ENCODE measurements at regions of chr9 and their contacts with region 1.

Region 1: GRCh38 chr9:32550562-32551433 is 1.3 kb upstream of the SMIM27 start:
- DNase-seq: peak; percentile 89 to 99 (median 96)
- ATAC-seq: peak; percentile 90
- H3K4me3 ChIP-seq: peak overlapping the region; percentile 93
- H3K4me3 Mint-ChIP-seq: peak overlapping the region; percentile 92 to 100 (median 99)
- H3K27ac ChIP-seq: peak overlapping the region; percentile 97
- H3K27ac Mint-ChIP-seq: peak overlapping the region; percentile 96 to 100 (median 98)
- H3K4me1 ChIP-seq: peaks cover 13 to 20% of the 10 kb centered on the region in 2 donors
- H3K4me1 Mint-ChIP-seq: peaks cover 31 to 70% (median 56%) of the 10 kb centered on the region in 7 donors
- H3K27me3 ChIP-seq: no peaks in the 10 kb centered on the region
- H3K27me3 Mint-ChIP-seq: no peaks in the 10 kb centered on the region

Region 2: DNA sequence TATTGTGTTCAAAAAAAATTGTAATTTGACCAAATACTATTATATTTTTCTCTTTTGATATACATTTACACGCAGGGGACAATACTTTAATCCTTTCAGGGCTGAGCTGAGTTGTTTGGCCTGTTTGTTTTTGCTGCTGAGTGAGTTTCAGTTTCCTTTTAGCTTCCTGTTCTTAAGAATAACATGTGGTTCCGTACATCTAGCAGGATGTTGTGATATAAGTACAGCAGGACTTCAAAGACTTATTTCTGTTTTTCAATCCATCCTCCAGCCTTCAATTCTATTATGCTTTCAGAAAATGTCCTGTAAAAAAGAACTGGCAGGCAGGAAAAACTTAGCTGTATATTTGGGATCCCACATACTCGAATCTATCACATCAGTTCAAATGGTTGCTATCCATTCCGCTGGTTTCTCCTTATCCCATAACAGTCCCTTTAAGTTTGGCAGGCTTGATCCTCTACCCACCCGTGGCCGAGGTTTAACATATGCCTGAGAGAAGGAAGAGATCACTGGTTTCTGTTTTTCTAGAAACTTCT is 1203.6 kb before region 1 on chr9:
- CTCF ChIA-PET with region 1: no interaction called
- POLR2A ChIA-PET with region 1: no interaction called
- intact Hi-C with region 1: loop called in 1 of 2 experiments (anchors 10 kb)
- DNase-seq: peak in 7 of 9 donors; percentile 58 to 81 (median 72)
- ATAC-seq: peak; percentile 97
- H3K4me3 ChIP-seq: peak overlapping the region; percentile 36
- H3K4me3 Mint-ChIP-seq: peak overlapping the region; percentile 63 to 82 (median 72)
- H3K27ac ChIP-seq: peak overlapping the region; percentile 77
- H3K27ac Mint-ChIP-seq: peak overlapping the region; percentile 93 to 98 (median 96)
- H3K4me1 ChIP-seq: peaks cover 25 to 26% of the 10 kb centered on the region in 2 donors
- H3K4me1 Mint-ChIP-seq: peaks cover 8 to 73% (median 58%) of the 10 kb centered on the region in 7 donors
- H3K27me3 ChIP-seq: no peaks in the 10 kb centered on the region
- H3K27me3 Mint-ChIP-seq: no peaks in the 10 kb centered on the region

Region 3: DNA sequence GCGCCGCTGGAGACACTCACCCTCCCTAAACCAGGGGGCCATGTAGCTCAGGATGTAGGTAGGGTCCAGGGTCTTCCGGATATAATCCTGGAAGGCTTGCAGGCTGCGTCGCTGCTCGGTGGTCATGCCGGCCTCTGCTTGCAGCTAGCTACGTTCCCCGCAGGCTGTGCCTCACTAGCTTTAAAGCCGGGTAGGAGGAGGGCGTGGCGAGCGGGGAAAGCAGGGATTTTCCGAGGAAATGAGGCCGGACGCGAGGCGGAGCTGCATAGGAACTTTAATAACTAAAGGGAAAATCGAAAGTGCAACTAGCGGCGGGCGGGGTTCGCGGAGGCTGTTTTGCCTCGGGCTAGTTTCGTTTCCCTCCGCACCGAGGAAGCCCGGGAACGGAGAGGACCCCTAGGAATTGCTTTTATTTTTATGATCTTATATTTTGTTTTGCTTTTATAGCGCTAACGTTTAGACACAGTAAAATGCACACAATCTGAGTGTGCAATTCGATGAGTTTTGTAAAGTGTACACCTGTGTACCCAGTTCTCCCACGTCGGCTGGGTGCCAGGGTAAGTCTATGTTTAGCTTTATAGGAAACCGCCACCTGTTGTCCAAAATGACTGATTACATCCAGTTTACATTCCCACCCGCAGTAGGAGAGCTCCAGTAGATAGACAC is 24.6 kb before region 1 on chr9 and contains the start of gene RIGI:
- CTCF ChIA-PET with region 1: interaction called, 12 read pairs
- POLR2A ChIA-PET with region 1: interaction called, 50 read pairs
- intact Hi-C with region 1: loop called (anchors 1 kb)
- DNase-seq: peak; percentile 52 to 85 (median 77)
- ATAC-seq: peak; percentile 84
- H3K4me3 ChIP-seq: peak within 1 kb of the TSS; percentile 98
- H3K4me3 Mint-ChIP-seq: peak within 1 kb of the TSS; percentile 83 to 99 (median 96)
- H3K27ac ChIP-seq: peak within 1 kb of the TSS; percentile 90
- H3K27ac Mint-ChIP-seq: peak within 1 kb of the TSS; percentile 84 to 98 (median 91)
- H3K4me1 ChIP-seq: peaks cover 9 to 29% of the 10 kb centered on the region in 2 donors
- H3K4me1 Mint-ChIP-seq: peaks cover 35 to 61% (median 58%) of the 10 kb centered on the region in 7 donors
- H3K27me3 ChIP-seq: no peaks in the 10 kb centered on the region
- H3K27me3 Mint-ChIP-seq: no peaks in the 10 kb centered on the region
- total RNA-seq, gene RIGI: 8.6 to 29.6 (median 26.8) TPM

Region 4: DNA sequence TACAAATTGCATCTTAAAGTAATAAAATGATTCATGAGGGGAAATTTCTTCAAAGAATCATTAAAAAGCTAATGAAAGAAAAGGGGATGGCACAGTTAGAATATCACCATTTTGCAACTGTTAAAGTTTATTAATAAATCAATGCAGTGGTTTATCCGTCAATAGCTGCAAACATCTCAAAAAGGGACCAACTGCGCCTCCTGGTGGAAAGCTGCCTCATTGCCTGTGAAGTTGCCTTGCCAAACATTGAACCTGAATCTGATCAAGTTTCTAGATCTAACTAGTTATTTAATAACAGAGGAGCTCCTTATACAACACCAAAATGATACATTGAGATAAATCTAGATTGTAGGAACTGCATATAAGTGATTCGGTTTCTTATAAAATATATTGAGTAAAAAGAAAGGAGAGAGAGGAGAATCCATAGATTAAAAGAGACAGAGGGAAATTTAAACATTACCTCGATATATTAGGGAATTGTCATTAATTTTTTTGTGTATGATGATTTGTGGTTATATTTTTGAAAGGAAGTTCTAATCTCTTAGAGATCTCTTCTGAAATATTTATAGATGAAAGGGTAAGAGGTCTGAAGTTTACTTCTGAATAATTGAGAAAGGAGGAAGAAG is 29.0 kb after region 1 on chr9:
- CTCF ChIA-PET with region 1: interaction called, 48 read pairs
- POLR2A ChIA-PET with region 1: no interaction called
- intact Hi-C with region 1: no loop called
- DNase-seq: peak; percentile 53 to 77 (median 66)
- ATAC-seq: peak; percentile 81
- H3K4me3 ChIP-seq: no peak overlapping the region
- H3K4me3 Mint-ChIP-seq: no peak overlapping the region
- H3K27ac ChIP-seq: no peak overlapping the region
- H3K27ac Mint-ChIP-seq: peak overlapping the region in 1 of 9 donors; percentile 48
- H3K4me1 ChIP-seq: no peaks in the 10 kb centered on the region
- H3K4me1 Mint-ChIP-seq: peaks cover 0 to 8% (median 0%) of the 10 kb centered on the region in 7 donors
- H3K27me3 ChIP-seq: no peaks in the 10 kb centered on the region
- H3K27me3 Mint-ChIP-seq: peaks cover 4 to 30% (median 7%) of the 10 kb centered on the region in 5 donors

Region 5: DNA sequence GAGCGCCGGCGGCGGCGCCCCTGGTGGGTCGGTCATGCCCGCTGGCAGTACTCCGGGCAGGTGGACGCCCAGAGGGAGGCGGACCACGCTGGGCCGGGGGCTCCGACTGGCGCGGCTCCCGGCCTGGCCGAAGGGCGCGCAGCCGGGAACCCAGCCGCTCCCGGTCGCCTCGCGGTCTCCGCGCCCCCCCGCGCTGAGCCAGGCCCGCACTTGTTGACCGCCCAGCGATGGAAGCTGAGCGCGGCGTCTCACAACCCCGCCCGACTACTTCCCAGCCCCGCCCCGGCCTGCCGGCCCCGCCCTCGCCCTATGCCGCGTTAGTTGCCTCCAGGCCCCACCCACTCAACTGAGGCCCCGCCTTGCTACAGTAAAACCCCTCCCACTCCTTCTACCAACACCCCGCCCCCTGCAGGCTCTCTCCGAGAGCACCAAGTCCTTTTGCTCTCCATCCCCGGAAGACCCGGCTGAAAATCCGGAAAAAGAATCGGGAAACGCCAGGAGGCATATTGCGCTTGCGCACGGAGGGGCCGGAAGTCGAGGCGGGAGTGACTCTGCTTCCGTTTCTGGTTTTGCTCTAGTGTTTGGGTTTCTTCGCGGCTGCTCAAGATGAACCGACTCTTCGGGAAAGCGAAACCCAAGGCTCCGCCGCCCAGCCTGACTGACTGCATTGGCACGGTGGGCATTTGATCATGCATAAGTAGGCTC is 713.8 kb after region 1 on chr9 and contains the starts of genes BAG1 and CHMP5:
- CTCF ChIA-PET with region 1: no interaction called
- POLR2A ChIA-PET with region 1: no interaction called
- intact Hi-C with region 1: loop called in 1 of 2 experiments (anchors 1 kb)
- DNase-seq: peak; percentile 98 to 100 (median 100)
- ATAC-seq: peak; percentile 99
- H3K4me3 ChIP-seq: peak within 1 kb of the TSS; percentile 95
- H3K4me3 Mint-ChIP-seq: peak within 1 kb of the TSS; percentile 82 to 98 (median 92)
- H3K27ac ChIP-seq: peak within 1 kb of the TSS; percentile 88
- H3K27ac Mint-ChIP-seq: peak within 1 kb of the TSS; percentile 84 to 99 (median 97)
- H3K4me1 ChIP-seq: peaks cover 15 to 34% of the 10 kb centered on the region in 2 donors
- H3K4me1 Mint-ChIP-seq: peaks cover 36 to 66% (median 55%) of the 10 kb centered on the region in 7 donors
- H3K27me3 ChIP-seq: no peaks in the 10 kb centered on the region
- H3K27me3 Mint-ChIP-seq: peaks cover 0 to 2% (median 0%) of the 10 kb centered on the region in 5 donors
- total RNA-seq, gene BAG1: 48.6 to 77.2 (median 61.0) TPM
- total RNA-seq, gene CHMP5: 21.4 to 74.6 (median 35.3) TPM

Region 6: GRCh38 chr9:34458013-34458958 is 1907.5 kb after region 1 on chr9 and contains the starts of genes DNAI1 and FAM219A:
- CTCF ChIA-PET with region 1: no interaction called
- POLR2A ChIA-PET with region 1: no interaction called
- intact Hi-C with region 1: loop called in 1 of 2 experiments (anchors 5 kb)
- DNase-seq: peak; percentile 97 to 100 (median 99)
- ATAC-seq: peak; percentile 98
- H3K4me3 ChIP-seq: peak within 1 kb of the TSS; percentile 68
- H3K4me3 Mint-ChIP-seq: peak within 1 kb of the TSS; percentile 86 to 93 (median 92)
- H3K27ac ChIP-seq: peak within 1 kb of the TSS; percentile 41
- H3K27ac Mint-ChIP-seq: peak within 1 kb of the TSS; percentile 57 to 93 (median 82)
- H3K4me1 ChIP-seq: peaks cover 13 to 16% of the 10 kb centered on the region in 2 donors
- H3K4me1 Mint-ChIP-seq: peaks cover 28 to 46% (median 38%) of the 10 kb centered on the region in 7 donors
- H3K27me3 ChIP-seq: no peaks in the 10 kb centered on the region
- H3K27me3 Mint-ChIP-seq: peaks cover 0 to 23% (median 6%) of the 10 kb centered on the region in 5 donors
- total RNA-seq, gene DNAI1: not detected
- total RNA-seq, gene FAM219A: 12.3 to 14.6 (median 13.4) TPM

Measured in naive thymus-derived CD4-positive, alpha-beta T cell (primary cell).